GM10248 (cell line): ENCODE measurements at regions of chr4 and their contacts with region 1.

Region 1: GRCh38 chr4:10587697-10588096 is 96.9 kb downstream of the CLNK start:
- DNase-seq: no peak
- CTCF ChIP-seq: no peak

Region 2: DNA sequence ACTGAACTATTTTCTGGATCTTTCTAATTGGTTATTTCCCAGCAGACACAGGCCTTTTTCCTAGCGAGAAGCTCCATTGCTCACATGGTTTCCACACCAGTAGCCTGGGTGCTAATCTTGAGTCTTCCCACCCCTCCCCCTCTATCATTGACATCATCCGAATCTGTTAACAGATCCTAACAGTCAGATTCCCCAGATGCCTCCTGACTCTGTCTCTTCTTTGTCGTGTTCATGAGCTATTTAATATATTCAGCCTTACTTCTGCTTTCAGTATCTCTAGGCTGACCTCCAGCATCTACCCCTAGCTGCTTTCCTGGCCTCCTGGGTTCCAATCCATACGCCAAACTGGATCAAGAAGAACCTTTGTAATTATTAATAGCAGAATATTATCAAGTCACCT is 11.9 kb after region 1 on chr4:
- CTCF ChIA-PET with region 1: interaction called, 15 read pairs
- POLR2A ChIA-PET with region 1: no interaction called
- DNase-seq: peak; percentile 29
- CTCF ChIP-seq: no peak